ENCODE measurements at regions of chr3 and their contacts with region 1.

Region 1: DNA sequence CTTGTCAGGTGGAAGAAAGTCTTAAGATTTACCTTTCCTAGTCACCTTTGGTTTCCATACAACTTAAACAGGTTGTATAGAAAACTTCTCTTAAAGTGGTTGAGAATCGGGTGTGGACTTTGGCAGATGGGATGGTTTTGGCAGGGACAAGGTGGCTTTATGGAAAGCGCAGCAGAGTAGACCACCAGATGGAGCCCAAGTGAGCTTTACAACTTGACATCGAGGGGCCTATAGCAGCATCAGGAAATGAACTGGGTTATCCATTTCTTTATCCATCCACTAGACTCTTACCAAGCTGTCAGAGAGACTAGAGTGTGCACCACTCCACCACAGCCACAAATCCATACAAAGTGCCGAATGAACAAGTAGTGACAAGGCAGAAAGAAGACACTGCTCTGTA is 85.3 kb upstream of the MBNL1 start:
- DNase-seq: peak; percentile 76
- ATAC-seq: peak; percentile 80
- H3K4me3 ChIP-seq: peak overlapping the region in 1 of 5 experiments; percentile 11
- H3K4me3 Mint-ChIP-seq: no peak overlapping the region
- H3K27ac ChIP-seq: no peak overlapping the region
- H3K27ac Mint-ChIP-seq: peak overlapping the region; percentile 62
- H3K4me1 ChIP-seq: peaks cover 5 to 9% of the 10 kb centered on the region in 2 donors
- H3K4me1 Mint-ChIP-seq: peaks cover 24% of the 10 kb centered on the region
- H3K27me3 ChIP-seq: no peaks in the 10 kb centered on the region
- H3K27me3 Mint-ChIP-seq: no peaks in the 10 kb centered on the region
- CTCF ChIP-seq: peak; percentile 81

Region 2: GRCh38 chr3:151795276-151795675 is 388.2 kb before region 1 on chr3:
- CTCF ChIA-PET with region 1: no interaction called
- POLR2A ChIA-PET with region 1: no interaction called
- intact Hi-C with region 1: no loop called
- DNase-seq: no peak
- ATAC-seq: no peak
- H3K4me3 ChIP-seq: no peak overlapping the region
- H3K4me3 Mint-ChIP-seq: no peak overlapping the region
- H3K27ac ChIP-seq: no peak overlapping the region
- H3K27ac Mint-ChIP-seq: no peak overlapping the region
- H3K4me1 ChIP-seq: no peaks in the 10 kb centered on the region
- H3K4me1 Mint-ChIP-seq: no peaks in the 10 kb centered on the region
- H3K27me3 ChIP-seq: no peaks in the 10 kb centered on the region
- H3K27me3 Mint-ChIP-seq: peaks cover 4% of the 10 kb centered on the region
- CTCF ChIP-seq: no peak

Region 3: DNA sequence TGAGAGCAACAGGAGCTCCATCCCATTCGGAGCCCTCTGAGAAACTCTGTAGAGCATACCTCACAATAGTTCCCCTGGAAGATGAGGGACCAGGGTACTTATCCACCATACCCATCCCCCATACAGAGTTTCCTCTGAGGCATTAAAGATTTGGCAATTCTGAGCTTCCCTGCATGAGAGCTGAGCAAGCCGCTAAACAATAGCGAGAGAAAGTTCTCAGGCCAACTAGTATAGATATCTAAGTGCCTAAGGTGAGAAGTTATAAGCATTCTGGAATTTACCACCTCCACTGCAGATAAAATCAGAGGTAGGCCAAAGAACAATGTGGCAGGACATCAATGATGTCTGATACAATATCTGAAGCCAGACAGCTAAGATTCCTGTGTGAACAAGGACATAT is 43.8 kb before region 1 on chr3:
- CTCF ChIA-PET with region 1: no interaction called
- POLR2A ChIA-PET with region 1: no interaction called
- intact Hi-C with region 1: no loop called
- DNase-seq: no peak
- ATAC-seq: no peak
- H3K4me3 ChIP-seq: no peak overlapping the region
- H3K4me3 Mint-ChIP-seq: no peak overlapping the region
- H3K27ac ChIP-seq: no peak overlapping the region
- H3K27ac Mint-ChIP-seq: no peak overlapping the region
- H3K4me1 ChIP-seq: no peaks in the 10 kb centered on the region
- H3K4me1 Mint-ChIP-seq: no peaks in the 10 kb centered on the region
- H3K27me3 ChIP-seq: no peaks in the 10 kb centered on the region
- H3K27me3 Mint-ChIP-seq: no peaks in the 10 kb centered on the region
- CTCF ChIP-seq: no peak

Region 4: GRCh38 chr3:152222327-152222726 is 38.9 kb after region 1 on chr3:
- CTCF ChIA-PET with region 1: interaction called, 14 read pairs
- POLR2A ChIA-PET with region 1: no interaction called
- intact Hi-C with region 1: no loop called
- DNase-seq: no peak
- ATAC-seq: no peak
- H3K4me3 ChIP-seq: no peak overlapping the region
- H3K4me3 Mint-ChIP-seq: peak overlapping the region; percentile 51
- H3K27ac ChIP-seq: peak overlapping the region in 1 of 2 donors; percentile 39
- H3K27ac Mint-ChIP-seq: peak overlapping the region; percentile 78
- H3K4me1 ChIP-seq: peaks cover 26 to 56% of the 10 kb centered on the region in 2 donors
- H3K4me1 Mint-ChIP-seq: peaks cover 59% of the 10 kb centered on the region
- H3K27me3 ChIP-seq: no peaks in the 10 kb centered on the region
- H3K27me3 Mint-ChIP-seq: no peaks in the 10 kb centered on the region
- CTCF ChIP-seq: no peak

Region 5: DNA sequence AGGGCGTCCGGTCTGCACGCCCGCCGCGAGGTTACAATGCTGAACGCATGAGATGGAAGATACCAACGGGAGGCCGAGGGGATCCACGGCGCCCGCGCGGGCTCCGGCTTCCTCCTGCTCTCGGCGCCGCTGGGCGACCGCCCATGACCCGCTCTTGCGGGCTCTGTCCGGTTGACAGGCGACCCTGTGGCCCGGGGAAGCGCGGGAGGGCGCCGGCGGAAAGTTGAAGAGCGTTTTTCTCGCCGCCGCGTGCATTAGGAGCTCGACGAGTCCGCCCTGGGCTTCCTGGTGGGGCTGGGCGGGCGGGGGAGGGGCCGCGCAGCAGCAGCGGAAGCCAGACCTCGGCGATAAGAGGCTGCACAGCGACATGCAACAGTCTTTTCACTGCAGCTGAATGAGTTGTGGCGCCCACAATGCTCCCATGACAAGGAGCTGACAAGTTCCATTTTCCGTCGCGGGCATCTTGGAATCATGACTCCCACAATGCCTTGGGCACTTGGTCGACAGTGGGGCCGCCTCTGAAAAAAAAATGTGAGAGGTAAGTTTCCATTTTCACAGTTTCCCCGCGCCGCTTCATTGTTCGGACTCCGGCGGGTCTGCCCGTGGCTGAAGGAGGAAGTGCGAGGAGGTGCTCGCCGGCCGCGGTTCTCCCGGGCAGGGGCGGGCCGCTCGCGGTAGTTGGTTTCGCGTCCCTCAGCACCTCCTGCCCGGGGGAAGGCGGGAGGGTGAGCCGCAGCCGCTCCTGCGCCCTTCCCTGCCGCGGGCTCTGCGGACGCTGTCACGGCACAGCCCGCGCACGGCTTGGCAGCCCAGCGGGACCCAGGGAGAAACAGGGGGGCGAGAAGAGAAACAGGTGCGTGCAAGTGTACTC is 85.3 kb after region 1 on chr3 and contains the start of gene MBNL1:
- CTCF ChIA-PET with region 1: interaction called, 51 read pairs
- POLR2A ChIA-PET with region 1: interaction called, 16 read pairs
- intact Hi-C with region 1: loop called (anchors 1 kb)
- DNase-seq: peak; percentile 93
- ATAC-seq: peak; percentile 70
- H3K4me3 ChIP-seq: peak within 1 kb of the TSS; percentile 91 to 100 (median 93)
- H3K4me3 Mint-ChIP-seq: peak within 1 kb of the TSS; percentile 87
- H3K27ac ChIP-seq: peak within 1 kb of the TSS; percentile 86 to 93
- H3K27ac Mint-ChIP-seq: peak within 1 kb of the TSS; percentile 96
- H3K4me1 ChIP-seq: peaks cover 29 to 49% of the 10 kb centered on the region in 2 donors
- H3K4me1 Mint-ChIP-seq: peaks cover 63% of the 10 kb centered on the region
- H3K27me3 ChIP-seq: no peaks in the 10 kb centered on the region
- H3K27me3 Mint-ChIP-seq: no peaks in the 10 kb centered on the region
- CTCF ChIP-seq: no peak
- total RNA-seq, gene MBNL1: 505 and 514 TPM in 2 replicates

Region 6: GRCh38 chr3:152298393-152299242 is 115.1 kb after region 1 on chr3:
- CTCF ChIA-PET with region 1: interaction called, 14 read pairs
- POLR2A ChIA-PET with region 1: no interaction called
- intact Hi-C with region 1: no loop called
- DNase-seq: peak; percentile 77
- ATAC-seq: peak; percentile 76
- H3K4me3 ChIP-seq: peak overlapping the region in 1 of 5 experiments; percentile 47
- H3K4me3 Mint-ChIP-seq: peak overlapping the region; percentile 79
- H3K27ac ChIP-seq: peak overlapping the region; percentile 16 to 61
- H3K27ac Mint-ChIP-seq: peak overlapping the region; percentile 86
- H3K4me1 ChIP-seq: peaks cover 47 to 75% of the 10 kb centered on the region in 2 donors
- H3K4me1 Mint-ChIP-seq: peaks cover 73% of the 10 kb centered on the region
- H3K27me3 ChIP-seq: no peaks in the 10 kb centered on the region
- H3K27me3 Mint-ChIP-seq: no peaks in the 10 kb centered on the region
- CTCF ChIP-seq: no peak

Region 7: DNA sequence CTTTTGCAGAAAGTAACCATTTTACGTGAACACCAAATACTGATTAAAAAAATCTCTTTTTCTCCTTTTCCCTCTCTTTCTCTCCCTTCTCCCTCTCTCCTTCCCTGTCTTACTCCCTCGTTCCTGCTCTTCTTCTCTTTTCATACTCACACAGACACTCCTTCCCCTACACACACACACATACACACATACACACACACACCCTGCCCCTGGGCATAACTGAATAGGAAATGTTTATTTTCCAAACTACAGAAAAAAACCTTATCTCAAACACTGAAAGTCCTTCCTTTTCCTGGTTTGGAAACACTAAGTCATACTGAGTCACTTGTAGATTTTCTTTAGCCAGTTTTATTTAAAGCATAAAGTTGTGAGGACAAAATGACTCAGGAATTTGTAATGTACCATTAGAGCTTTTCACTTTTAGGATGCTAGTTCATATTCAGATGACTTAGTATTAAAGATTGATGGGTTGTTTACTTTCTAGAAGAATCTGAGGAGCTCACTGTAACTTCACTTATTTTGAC is 147.6 kb after region 1 on chr3:
- CTCF ChIA-PET with region 1: interaction called, 10 read pairs
- POLR2A ChIA-PET with region 1: no interaction called
- intact Hi-C with region 1: no loop called
- DNase-seq: no peak
- ATAC-seq: no peak
- H3K4me3 ChIP-seq: no peak overlapping the region
- H3K4me3 Mint-ChIP-seq: peak overlapping the region; percentile 2
- H3K27ac ChIP-seq: peak overlapping the region in 1 of 2 donors; percentile 70
- H3K27ac Mint-ChIP-seq: peak overlapping the region; percentile 32
- H3K4me1 ChIP-seq: peaks cover 38 to 60% of the 10 kb centered on the region in 2 donors
- H3K4me1 Mint-ChIP-seq: peaks cover 75% of the 10 kb centered on the region
- H3K27me3 ChIP-seq: no peaks in the 10 kb centered on the region
- H3K27me3 Mint-ChIP-seq: no peaks in the 10 kb centered on the region
- CTCF ChIP-seq: no peak

Region 8: DNA sequence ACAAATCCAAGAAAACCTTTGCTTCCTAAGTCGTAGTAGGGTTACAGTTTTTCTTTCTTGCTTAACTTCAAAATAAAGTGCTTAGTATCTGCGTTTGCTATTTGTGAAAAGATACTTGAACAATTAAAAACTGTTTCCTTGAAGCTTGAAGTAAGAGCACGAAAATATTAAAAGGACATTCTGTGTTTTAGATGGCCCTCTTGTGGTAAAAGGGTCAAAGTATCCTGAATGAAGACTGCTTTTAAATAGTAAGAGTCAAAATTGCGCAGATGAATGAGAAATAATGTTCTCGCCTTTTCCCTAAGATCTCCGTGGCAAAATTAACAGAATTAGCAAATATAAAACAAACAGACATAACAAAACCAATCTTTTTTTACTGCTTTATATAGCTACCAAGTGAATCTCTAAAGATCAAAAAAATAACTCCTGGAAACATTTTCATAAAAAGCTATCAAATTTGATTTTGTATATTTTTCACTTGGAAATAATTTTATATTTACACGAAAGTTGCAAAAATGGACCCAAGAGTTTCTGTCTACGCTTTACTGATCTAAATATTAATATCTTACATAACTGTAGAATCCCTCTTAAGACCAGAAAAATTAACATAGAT is 260.7 kb after region 1 on chr3:
- CTCF ChIA-PET with region 1: interaction called, 222 read pairs
- POLR2A ChIA-PET with region 1: interaction called, 5 read pairs
- intact Hi-C with region 1: loop called (anchors 1 kb)
- DNase-seq: peak; percentile 67
- ATAC-seq: peak; percentile 62
- H3K4me3 ChIP-seq: no peak overlapping the region
- H3K4me3 Mint-ChIP-seq: no peak overlapping the region
- H3K27ac ChIP-seq: peak overlapping the region in 1 of 2 donors; percentile 63
- H3K27ac Mint-ChIP-seq: peak overlapping the region; percentile 0
- H3K4me1 ChIP-seq: peaks cover 5 to 16% of the 10 kb centered on the region in 2 donors
- H3K4me1 Mint-ChIP-seq: peaks cover 55% of the 10 kb centered on the region
- H3K27me3 ChIP-seq: no peaks in the 10 kb centered on the region
- H3K27me3 Mint-ChIP-seq: no peaks in the 10 kb centered on the region
- CTCF ChIP-seq: peak; percentile 79

Measured in B cell (primary cell).